ENCODE measurements at regions of chr1 and their contacts with region 1.

Region 1: DNA sequence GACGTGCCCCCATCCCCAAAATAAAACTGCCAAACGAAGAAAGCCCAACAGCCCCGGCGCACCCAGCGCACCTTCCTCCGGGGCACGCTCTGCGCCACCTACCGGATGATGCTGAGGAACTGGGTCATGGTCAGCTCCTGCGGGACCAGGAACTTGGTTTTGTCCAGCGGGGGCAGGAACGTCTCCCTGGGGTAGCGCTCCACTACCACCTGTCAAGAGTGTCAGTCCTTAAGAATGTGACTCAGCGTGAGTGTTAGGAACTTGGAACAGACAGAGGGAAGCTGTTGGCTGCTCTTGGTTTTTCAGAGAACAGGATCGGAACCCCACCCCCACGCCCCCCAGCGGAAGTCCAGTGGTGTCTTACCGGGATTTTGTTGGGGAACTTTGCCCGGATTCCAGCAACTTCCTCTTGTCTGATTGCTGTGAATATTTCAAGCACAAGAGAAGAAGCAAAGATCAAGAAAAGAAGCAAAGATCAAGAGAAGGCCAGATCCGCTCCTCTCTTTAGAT is 431 bp downstream of the MAP1LC3C start:
- DNase-seq: peak; percentile 84

Region 2: GRCh38 chr1:241531195-241532161 is 467.0 kb before region 1 on chr1:
- intact Hi-C with region 1: loop called (anchors 10 kb)
- DNase-seq: no peak

Region 3: DNA sequence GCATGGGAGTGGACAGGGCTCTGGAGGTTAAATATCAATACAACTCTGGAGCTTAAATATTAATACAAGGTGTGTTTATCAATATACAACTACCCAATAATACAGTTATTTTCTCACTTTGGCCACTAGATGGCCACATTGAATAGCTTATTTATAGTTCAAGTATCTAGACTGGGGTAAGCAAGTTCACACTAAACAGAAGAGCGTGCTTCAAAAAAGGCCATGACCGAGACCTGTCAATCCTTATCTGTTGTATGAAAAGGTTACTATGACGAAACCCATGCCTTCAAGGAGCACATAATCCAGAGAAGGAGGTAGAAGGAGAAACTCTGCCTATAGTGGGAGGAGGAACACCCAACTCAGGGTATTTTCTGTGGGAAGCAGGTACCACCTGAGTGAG is 387.4 kb before region 1 on chr1:
- intact Hi-C with region 1: loop called (anchors 10 kb)
- DNase-seq: no peak

Region 4: GRCh38 chr1:241857131-241857530 is 141.3 kb before region 1 on chr1:
- intact Hi-C with region 1: no loop called
- DNase-seq: no peak

Region 5: GRCh38 chr1:241895013-241895412 is 103.5 kb before region 1 on chr1:
- intact Hi-C with region 1: loop called (anchors 5 kb)
- DNase-seq: no peak